OCI-LY7 (cell line): ENCODE measurements at regions of chr5 and their contacts with region 1.

Region 1: DNA sequence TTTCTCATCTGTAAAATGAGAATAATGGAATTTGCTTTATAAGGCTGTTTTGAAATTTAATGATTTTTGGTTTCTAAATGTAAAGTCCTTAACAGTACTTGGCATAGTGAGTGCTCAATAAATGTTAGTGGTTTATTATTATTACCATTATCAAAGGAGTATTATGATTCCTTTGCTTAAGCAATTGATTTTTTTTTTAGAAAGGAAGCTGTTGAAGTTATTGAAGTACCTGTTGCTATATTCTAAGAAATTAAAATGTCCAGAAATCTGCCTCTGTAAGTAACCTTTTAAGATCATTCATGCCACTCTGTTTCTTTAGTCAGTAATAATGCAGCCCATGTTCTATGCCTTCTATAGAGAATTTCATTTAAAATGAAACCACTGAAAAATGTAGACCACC is 15.0 kb downstream of the SMAD5 start:
- DNase-seq: no peak
- H3K4me3 ChIP-seq: no peak overlapping the region
- H3K27ac ChIP-seq: no peak overlapping the region
- H3K4me1 ChIP-seq: peaks cover 45% of the 10 kb centered on the region
- CTCF ChIP-seq: no peak

Region 2: DNA sequence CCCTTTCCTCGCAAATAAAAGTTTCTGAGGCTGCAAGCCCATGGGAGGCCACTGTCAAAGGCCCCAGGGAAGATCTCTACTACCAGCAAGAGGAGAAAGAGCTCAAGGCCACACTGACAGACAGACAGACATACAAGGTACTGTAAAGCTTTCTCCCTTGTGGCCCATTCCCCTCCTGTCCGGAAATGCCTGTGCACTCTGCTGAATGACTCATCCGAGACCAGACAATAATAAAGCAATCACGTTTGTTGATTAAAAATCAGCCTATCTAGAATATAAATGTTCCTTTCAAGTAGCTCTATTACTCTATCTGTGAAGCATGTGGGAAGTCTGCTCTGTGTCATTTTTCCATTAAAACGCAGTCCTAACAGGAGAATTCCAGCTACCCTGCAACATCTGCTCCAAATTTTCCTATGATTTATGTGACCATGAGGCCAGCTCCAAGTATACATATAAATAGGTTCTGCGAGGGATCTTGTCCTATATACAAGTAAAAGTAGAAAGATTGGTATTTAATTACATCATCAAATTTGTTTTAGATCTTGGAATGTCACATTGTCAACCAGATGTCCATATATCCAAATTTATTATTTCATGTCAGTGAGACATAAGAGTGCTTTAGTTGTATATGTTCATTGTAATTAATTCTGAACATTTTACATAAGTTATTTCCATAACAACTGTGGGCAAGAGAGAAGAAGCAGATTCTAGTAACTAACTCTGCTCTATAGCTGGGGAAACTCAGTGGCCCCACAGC is 153.6 kb before region 1 on chr5:
- CTCF ChIA-PET with region 1: no interaction called
- POLR2A ChIA-PET with region 1: no interaction called
- intact Hi-C with region 1: no loop called
- DNase-seq: no peak
- H3K4me3 ChIP-seq: no peak overlapping the region
- H3K27ac ChIP-seq: no peak overlapping the region
- H3K4me1 ChIP-seq: no peaks in the 10 kb centered on the region
- CTCF ChIP-seq: no peak

Region 3: DNA sequence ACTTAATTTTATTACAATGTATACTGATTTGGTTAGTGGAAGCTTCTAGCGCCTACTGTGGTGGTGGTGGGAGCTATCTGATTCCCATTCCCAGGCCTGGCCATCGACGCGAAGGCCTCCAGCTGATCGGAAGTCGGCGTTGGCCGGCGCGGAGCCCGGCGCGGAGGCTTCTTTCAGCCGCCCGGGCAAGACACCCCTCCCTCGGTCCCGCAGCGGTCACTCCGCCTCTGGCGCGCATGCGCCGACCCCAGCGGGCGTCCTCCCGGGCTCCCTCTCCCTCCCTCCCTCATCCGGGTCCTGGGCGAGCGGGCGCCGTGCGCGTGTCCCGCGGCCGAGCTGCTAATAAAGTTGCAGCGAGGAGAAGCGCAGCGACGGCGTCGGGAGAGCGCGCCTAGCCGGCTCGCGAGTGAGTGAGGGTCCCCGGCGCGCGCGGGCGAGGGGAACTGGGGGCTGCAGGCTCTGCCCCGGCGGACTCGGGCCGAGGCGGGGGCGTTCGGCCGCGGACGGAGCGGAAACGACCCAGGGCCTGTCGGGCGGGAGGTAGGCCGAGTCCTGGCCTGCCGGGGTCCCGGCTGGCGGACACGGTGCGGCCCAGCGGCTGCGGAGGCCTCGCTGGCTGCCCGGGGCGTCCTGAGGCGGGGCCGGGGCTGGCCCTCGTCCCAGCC is 14.9 kb before region 1 on chr5 and contains the start of gene SMAD5:
- CTCF ChIA-PET with region 1: interaction called, 4 read pairs
- POLR2A ChIA-PET with region 1: interaction called, 46 read pairs
- intact Hi-C with region 1: no loop called
- DNase-seq: peak; percentile 93
- H3K4me3 ChIP-seq: peak within 1 kb of the TSS; percentile 95
- H3K27ac ChIP-seq: peak within 1 kb of the TSS; percentile 78
- H3K4me1 ChIP-seq: peaks cover 35% of the 10 kb centered on the region
- CTCF ChIP-seq: 0 out of 2 replicates have a peak, but pooled peaks have one; percentile 5
- total RNA-seq, gene SMAD5: 32.9 and 62.0 TPM in 2 replicates